ENCODE measurements at regions of chr3 and their contacts with region 1.

Region 1: DNA sequence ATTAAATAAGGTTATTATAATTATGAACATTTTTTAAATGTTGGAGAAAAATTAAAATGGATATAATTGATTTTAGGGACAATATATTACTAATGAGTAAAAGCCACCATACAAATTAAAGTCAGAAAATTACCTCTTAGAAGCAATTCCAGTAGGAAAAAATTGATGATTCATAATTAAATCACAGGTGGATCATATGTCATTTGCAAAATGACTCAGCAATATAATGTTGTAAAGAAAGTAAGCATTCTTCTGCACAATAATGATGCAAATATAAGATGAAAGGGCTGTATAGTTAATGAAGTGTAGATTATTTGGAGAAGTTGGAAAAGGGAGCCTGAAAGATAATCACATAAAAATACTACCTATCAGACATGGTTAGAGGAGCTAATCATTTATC is 25.8 kb downstream of the ZPLD1 start:
- DNase-seq: no peak
- H3K4me3 ChIP-seq: no peak overlapping the region
- H3K27ac ChIP-seq: no peak overlapping the region
- H3K4me1 ChIP-seq: no peaks in the 10 kb centered on the region
- H3K27me3 ChIP-seq: no peaks in the 10 kb centered on the region
- CTCF ChIP-seq: no peak

Region 2: DNA sequence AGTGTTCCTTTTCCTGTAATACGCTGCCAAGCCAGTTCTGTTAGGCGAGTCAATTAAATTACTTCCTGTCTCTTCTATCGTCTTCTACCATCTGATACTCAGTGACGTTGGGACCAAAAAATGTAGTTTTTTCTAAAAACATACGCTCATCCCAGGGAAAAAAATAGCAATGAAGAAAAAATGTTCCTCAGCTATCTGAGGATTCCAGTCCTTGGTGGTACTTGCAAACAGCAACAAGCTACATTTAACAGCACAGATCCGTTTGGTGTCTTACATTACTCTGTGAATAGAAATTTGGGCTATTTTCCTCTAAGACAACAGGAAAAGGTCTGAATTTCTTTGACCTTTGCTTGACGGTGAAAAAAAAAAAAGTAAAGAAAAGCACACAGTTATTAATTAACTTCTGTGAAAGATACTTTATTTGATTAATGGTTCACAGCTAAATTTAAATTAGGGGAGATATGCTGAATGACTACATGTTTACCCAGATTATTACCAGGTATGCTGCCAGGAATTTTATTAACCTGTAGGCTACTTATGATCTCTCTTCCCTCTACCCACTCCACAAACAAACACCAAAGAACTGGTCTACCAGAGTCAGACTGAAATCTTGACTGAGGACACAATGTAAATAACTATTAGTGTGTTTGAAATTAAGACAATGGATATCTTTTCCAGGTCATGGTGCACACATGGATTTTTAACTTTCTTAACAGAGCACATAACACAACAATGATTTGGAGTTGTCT is 280.1 kb before region 1 on chr3:
- CTCF ChIA-PET with region 1: no interaction called
- POLR2A ChIA-PET with region 1: no interaction called
- intact Hi-C with region 1: no loop called
- DNase-seq: peak; percentile 93
- H3K4me3 ChIP-seq: no peak overlapping the region
- H3K27ac ChIP-seq: peak overlapping the region; percentile 94
- H3K4me1 ChIP-seq: peaks cover 60% of the 10 kb centered on the region
- H3K27me3 ChIP-seq: no peaks in the 10 kb centered on the region
- CTCF ChIP-seq: no peak

Region 3: GRCh38 chr3:102361101-102361500 is 99.5 kb before region 1 on chr3:
- CTCF ChIA-PET with region 1: no interaction called
- POLR2A ChIA-PET with region 1: no interaction called
- intact Hi-C with region 1: no loop called
- DNase-seq: peak; percentile 4
- H3K4me3 ChIP-seq: no peak overlapping the region
- H3K27ac ChIP-seq: no peak overlapping the region
- H3K4me1 ChIP-seq: no peaks in the 10 kb centered on the region
- H3K27me3 ChIP-seq: no peaks in the 10 kb centered on the region
- CTCF ChIP-seq: no peak

Region 4: GRCh38 chr3:102374863-102375634 is 85.5 kb before region 1 on chr3:
- CTCF ChIA-PET with region 1: no interaction called
- POLR2A ChIA-PET with region 1: interaction called, 12 read pairs
- intact Hi-C with region 1: no loop called
- DNase-seq: peak; percentile 7
- H3K4me3 ChIP-seq: no peak overlapping the region
- H3K27ac ChIP-seq: no peak overlapping the region
- H3K4me1 ChIP-seq: no peaks in the 10 kb centered on the region
- H3K27me3 ChIP-seq: no peaks in the 10 kb centered on the region
- CTCF ChIP-seq: no peak

Region 5: GRCh38 chr3:102530441-102531195 is 70.0 kb after region 1 on chr3:
- CTCF ChIA-PET with region 1: no interaction called
- POLR2A ChIA-PET with region 1: no interaction called
- intact Hi-C with region 1: no loop called
- DNase-seq: no peak
- H3K4me3 ChIP-seq: no peak overlapping the region
- H3K27ac ChIP-seq: no peak overlapping the region
- H3K4me1 ChIP-seq: peaks cover 3% of the 10 kb centered on the region
- H3K27me3 ChIP-seq: no peaks in the 10 kb centered on the region
- CTCF ChIP-seq: no peak

Measured in A673 (cell line).